Activated naive CD4-positive, alpha-beta T cell treated with anti-CD3 and anti-CD28 coated beads for 36 hours (primary cell): ENCODE measurements at regions of chr18 and their contacts with region 1.

Region 1: GRCh38 chr18:77407733-77408132 is 158.1 kb downstream of the GALR1 start:
- DNase-seq: no peak
- H3K4me3 Mint-ChIP-seq: no peak overlapping the region
- H3K27ac Mint-ChIP-seq: no peak overlapping the region
- H3K4me1 Mint-ChIP-seq: no peaks in the 10 kb centered on the region
- H3K27me3 Mint-ChIP-seq: no peaks in the 10 kb centered on the region

Region 2: GRCh38 chr18:77032181-77032701 is 375.5 kb before region 1 on chr18:
- CTCF ChIA-PET with region 1: no interaction called
- intact Hi-C with region 1: no loop called
- DNase-seq: no peak
- H3K4me3 Mint-ChIP-seq: no peak overlapping the region
- H3K27ac Mint-ChIP-seq: no peak overlapping the region
- H3K4me1 Mint-ChIP-seq: peaks cover 21% of the 10 kb centered on the region
- H3K27me3 Mint-ChIP-seq: no peaks in the 10 kb centered on the region

Region 3: GRCh38 chr18:77320971-77321559 is 86.7 kb before region 1 on chr18:
- CTCF ChIA-PET with region 1: no interaction called
- intact Hi-C with region 1: no loop called
- DNase-seq: no peak
- H3K4me3 Mint-ChIP-seq: no peak overlapping the region
- H3K27ac Mint-ChIP-seq: no peak overlapping the region
- H3K4me1 Mint-ChIP-seq: no peaks in the 10 kb centered on the region
- H3K27me3 Mint-ChIP-seq: peaks cover 7% of the 10 kb centered on the region

Region 4: DNA sequence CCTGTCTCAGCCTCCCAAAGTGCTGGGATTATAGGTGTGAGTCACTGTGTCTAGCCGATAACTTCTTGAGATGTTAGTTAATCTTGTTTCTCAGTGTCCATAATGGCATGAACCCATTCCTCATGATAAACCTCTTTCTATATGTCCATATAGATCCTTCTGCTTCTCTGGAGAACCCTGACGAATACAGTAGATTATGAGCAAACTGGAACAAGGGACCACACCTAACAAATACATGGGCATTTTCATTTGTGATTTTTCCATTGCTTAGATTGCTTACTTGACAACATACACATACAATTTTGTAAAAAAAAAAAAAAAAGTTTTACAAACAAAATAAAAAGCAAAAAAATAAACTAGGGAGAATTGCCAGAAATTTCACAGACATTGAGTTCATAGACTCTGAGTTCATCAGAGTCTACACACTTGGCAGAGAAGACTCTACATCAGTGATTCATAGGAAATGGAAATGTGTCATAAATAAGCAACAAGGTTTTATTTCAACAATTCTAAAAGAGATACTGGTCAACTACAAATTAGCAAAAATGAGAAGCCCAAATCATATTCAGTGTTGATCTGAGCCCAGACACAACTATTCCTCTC is 61.4 kb before region 1 on chr18:
- CTCF ChIA-PET with region 1: no interaction called
- intact Hi-C with region 1: loop called (anchors 10 kb)
- DNase-seq: no peak
- H3K4me3 Mint-ChIP-seq: no peak overlapping the region
- H3K27ac Mint-ChIP-seq: no peak overlapping the region
- H3K4me1 Mint-ChIP-seq: peaks cover 3% of the 10 kb centered on the region
- H3K27me3 Mint-ChIP-seq: no peaks in the 10 kb centered on the region

Region 5: GRCh38 chr18:77461062-77461688 is 53.4 kb after region 1 on chr18:
- CTCF ChIA-PET with region 1: no interaction called
- intact Hi-C with region 1: no loop called
- DNase-seq: no peak
- H3K4me3 Mint-ChIP-seq: no peak overlapping the region
- H3K27ac Mint-ChIP-seq: no peak overlapping the region
- H3K4me1 Mint-ChIP-seq: no peaks in the 10 kb centered on the region
- H3K27me3 Mint-ChIP-seq: peaks cover 3% of the 10 kb centered on the region